B cell (primary cell): ENCODE measurements at regions of chr16 and their contacts with region 1.

Region 1: GRCh38 chr16:22297114-22297878 is at the start of gene POLR3E:
- DNase-seq: peak; percentile 100
- ATAC-seq: peak; percentile 95
- H3K4me3 ChIP-seq: peak within 1 kb of the TSS; percentile 73 to 97 (median 91)
- H3K4me3 Mint-ChIP-seq: peak within 1 kb of the TSS; percentile 91
- H3K27ac ChIP-seq: peak within 1 kb of the TSS; percentile 93 to 94
- H3K27ac Mint-ChIP-seq: peak within 1 kb of the TSS; percentile 99
- H3K4me1 ChIP-seq: peaks cover 18 to 35% of the 10 kb centered on the region in 2 donors
- H3K4me1 Mint-ChIP-seq: peaks cover 40% of the 10 kb centered on the region
- H3K27me3 ChIP-seq: no peaks in the 10 kb centered on the region
- H3K27me3 Mint-ChIP-seq: no peaks in the 10 kb centered on the region
- CTCF ChIP-seq: peak; percentile 86
- total RNA-seq, gene POLR3E: 98.4 and 101 TPM in 2 replicates

Region 2: DNA sequence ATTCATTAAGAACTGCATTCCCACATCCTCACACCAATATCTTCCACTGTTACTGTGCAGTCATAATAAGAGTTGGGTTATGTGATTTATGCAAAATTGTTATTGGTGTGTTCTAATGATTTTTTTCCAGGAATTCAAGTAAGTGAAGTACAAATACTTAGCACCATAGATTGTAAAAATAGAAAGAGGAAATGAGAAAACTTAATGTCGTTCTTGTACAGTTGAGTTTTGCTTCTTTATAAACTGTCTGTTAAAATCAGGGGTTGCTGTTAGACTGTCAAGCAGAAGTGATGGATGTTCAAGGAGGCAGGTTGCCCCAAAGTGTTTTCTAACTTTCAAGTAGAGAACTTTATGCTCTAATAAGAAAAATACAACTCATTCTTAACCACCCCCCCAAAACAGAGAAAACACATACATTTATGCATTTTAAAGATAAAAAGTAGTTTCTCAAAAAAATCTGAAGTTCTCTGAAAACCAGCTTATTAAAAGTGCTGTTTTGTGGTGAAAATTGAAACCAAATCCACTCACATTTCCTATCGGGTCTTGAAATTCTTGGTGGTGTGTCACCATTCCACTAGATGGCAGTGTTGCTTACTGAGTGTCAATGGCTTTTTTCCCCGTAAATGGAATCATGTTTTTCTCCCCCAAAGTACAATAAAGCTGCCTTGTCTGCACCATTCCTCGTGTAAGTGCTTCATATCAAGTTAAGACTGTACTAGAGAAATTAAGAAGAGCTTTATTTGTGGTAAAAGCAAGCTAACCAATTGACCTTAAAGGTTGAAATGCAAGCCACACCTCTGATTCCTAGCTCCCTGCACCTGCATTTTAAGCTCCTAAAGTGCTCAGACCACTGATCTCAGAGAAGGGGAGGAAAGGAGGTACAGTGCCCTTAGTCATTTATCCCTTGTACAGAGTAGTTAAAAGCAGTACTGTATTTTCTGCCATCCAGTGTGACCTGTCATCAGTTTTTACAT is 640.2 kb before region 1 on chr16:
- CTCF ChIA-PET with region 1: no interaction called
- POLR2A ChIA-PET with region 1: no interaction called
- intact Hi-C with region 1: loop called (anchors 5 kb)
- DNase-seq: peak; percentile 81
- ATAC-seq: peak; percentile 82
- H3K4me3 ChIP-seq: peak overlapping the region in 3 of 5 experiments; percentile 0 to 47 (median 44)
- H3K4me3 Mint-ChIP-seq: peak overlapping the region; percentile 79
- H3K27ac ChIP-seq: peak overlapping the region; percentile 51 to 78
- H3K27ac Mint-ChIP-seq: peak overlapping the region; percentile 88
- H3K4me1 ChIP-seq: peaks cover 74 to 77% of the 10 kb centered on the region in 2 donors
- H3K4me1 Mint-ChIP-seq: peaks cover 82% of the 10 kb centered on the region
- H3K27me3 ChIP-seq: no peaks in the 10 kb centered on the region
- H3K27me3 Mint-ChIP-seq: no peaks in the 10 kb centered on the region
- CTCF ChIP-seq: peak; percentile 92

Region 3: DNA sequence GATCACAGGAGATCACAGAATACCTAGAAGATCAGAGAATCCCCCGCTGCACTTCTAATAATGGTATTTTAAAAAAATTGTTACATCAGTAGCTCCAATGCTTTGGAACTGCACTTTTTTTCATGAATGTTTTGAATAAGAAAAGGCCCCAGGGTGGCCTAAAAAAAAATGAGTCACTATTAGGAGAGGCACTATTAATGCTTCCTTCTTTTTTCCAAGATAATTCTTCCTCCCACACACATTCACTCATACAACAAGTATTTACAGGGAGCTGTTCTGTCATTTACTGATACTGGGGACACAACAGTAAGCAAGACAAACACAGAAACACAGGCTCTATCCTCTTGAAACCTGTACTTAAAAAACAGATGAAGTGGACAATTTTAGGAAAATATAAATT is 295.7 kb before region 1 on chr16:
- CTCF ChIA-PET with region 1: interaction called, 15 read pairs
- POLR2A ChIA-PET with region 1: no interaction called
- intact Hi-C with region 1: loop called (anchors 1 kb)
- DNase-seq: peak; percentile 16
- ATAC-seq: no peak
- H3K4me3 ChIP-seq: no peak overlapping the region
- H3K4me3 Mint-ChIP-seq: no peak overlapping the region
- H3K27ac ChIP-seq: no peak overlapping the region
- H3K27ac Mint-ChIP-seq: no peak overlapping the region
- H3K4me1 ChIP-seq: peaks cover 4 to 9% of the 10 kb centered on the region in 2 donors
- H3K4me1 Mint-ChIP-seq: peaks cover 6% of the 10 kb centered on the region
- H3K27me3 ChIP-seq: no peaks in the 10 kb centered on the region
- H3K27me3 Mint-ChIP-seq: no peaks in the 10 kb centered on the region
- CTCF ChIP-seq: no peak

Region 4: DNA sequence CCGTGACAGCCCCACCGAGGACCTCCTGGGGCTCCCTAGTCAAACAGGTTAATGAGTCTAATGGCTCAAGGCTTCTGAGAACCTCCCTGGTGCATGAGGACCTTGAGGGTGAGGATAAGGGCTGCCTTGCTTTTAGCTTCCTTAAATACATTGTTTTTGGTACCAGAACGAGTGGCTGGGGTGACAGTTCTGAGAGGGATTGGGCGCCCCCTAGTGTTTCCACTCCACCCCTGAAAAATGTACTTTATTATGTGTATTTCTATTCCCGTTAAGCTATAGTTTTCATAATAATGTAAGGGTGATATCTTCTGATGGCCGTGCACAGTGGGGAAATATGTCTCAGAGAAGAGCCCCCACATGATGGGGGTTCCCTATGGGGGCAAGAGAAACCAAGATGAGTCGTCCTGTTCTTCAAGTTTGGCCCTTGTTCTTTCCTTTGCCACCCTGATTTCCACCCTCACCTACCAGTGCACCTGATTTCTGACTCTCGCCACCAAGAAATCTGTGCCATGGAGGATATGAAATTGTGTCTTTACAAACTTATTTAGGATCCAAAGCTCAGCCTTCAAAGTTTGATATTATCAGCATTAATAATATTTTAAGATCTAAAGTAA is 219.5 kb before region 1 on chr16:
- CTCF ChIA-PET with region 1: interaction called, 15 read pairs
- POLR2A ChIA-PET with region 1: no interaction called
- intact Hi-C with region 1: loop called (anchors 1 kb)
- DNase-seq: peak; percentile 79
- ATAC-seq: peak; percentile 60
- H3K4me3 ChIP-seq: no peak overlapping the region
- H3K4me3 Mint-ChIP-seq: no peak overlapping the region
- H3K27ac ChIP-seq: no peak overlapping the region
- H3K27ac Mint-ChIP-seq: no peak overlapping the region
- H3K4me1 ChIP-seq: no peaks in the 10 kb centered on the region
- H3K4me1 Mint-ChIP-seq: no peaks in the 10 kb centered on the region
- H3K27me3 ChIP-seq: no peaks in the 10 kb centered on the region
- H3K27me3 Mint-ChIP-seq: no peaks in the 10 kb centered on the region
- CTCF ChIP-seq: peak; percentile 96

Region 5: GRCh38 chr16:22190776-22191531 is 106.3 kb before region 1 on chr16:
- CTCF ChIA-PET with region 1: interaction called, 53 read pairs
- POLR2A ChIA-PET with region 1: interaction called, 15 read pairs
- intact Hi-C with region 1: loop called (anchors 1 kb)
- DNase-seq: peak; percentile 100
- ATAC-seq: peak; percentile 58
- H3K4me3 ChIP-seq: peak overlapping the region; percentile 53 to 78 (median 66)
- H3K4me3 Mint-ChIP-seq: peak overlapping the region; percentile 99
- H3K27ac ChIP-seq: peak overlapping the region; percentile 96 to 100
- H3K27ac Mint-ChIP-seq: peak overlapping the region; percentile 100
- H3K4me1 ChIP-seq: peaks cover 43 to 52% of the 10 kb centered on the region in 2 donors
- H3K4me1 Mint-ChIP-seq: peaks cover 59% of the 10 kb centered on the region
- H3K27me3 ChIP-seq: no peaks in the 10 kb centered on the region
- H3K27me3 Mint-ChIP-seq: peaks cover 3% of the 10 kb centered on the region
- CTCF ChIP-seq: no peak

Region 6: GRCh38 chr16:22278441-22279236 is 18.7 kb before region 1 on chr16:
- CTCF ChIA-PET with region 1: no interaction called
- POLR2A ChIA-PET with region 1: interaction called, 13 read pairs
- intact Hi-C with region 1: no loop called
- DNase-seq: no peak
- ATAC-seq: no peak
- H3K4me3 ChIP-seq: no peak overlapping the region
- H3K4me3 Mint-ChIP-seq: no peak overlapping the region
- H3K27ac ChIP-seq: no peak overlapping the region
- H3K27ac Mint-ChIP-seq: no peak overlapping the region
- H3K4me1 ChIP-seq: no peaks in the 10 kb centered on the region
- H3K4me1 Mint-ChIP-seq: no peaks in the 10 kb centered on the region
- H3K27me3 ChIP-seq: no peaks in the 10 kb centered on the region
- H3K27me3 Mint-ChIP-seq: no peaks in the 10 kb centered on the region
- CTCF ChIP-seq: no peak

Region 7: DNA sequence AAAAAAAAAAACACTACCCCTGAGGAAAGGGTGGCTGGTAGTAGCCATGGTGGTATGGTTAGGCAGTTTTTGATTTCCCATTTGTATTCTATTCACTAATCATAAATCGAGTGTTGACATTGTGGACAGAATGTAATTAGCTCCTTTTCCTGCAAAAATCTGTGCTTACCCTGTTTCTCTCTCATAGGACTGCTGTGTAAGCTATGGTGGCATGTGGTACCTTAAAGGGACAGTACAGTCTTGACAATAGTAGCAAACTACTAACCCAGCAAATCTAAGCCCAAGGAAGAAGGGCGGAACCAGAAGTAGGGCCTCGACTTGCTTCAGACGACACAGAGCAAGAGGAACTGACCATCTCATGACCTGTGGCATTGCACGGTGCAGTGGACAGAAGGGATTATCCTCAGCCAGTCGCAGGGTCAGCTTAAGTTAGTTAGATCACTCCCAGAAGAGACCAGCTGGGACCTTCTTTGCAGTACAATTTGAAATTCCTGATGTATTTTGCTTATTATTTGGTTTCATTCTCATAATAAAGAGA is 36.2 kb after region 1 on chr16:
- CTCF ChIA-PET with region 1: no interaction called
- POLR2A ChIA-PET with region 1: no interaction called
- intact Hi-C with region 1: no loop called
- DNase-seq: no peak
- ATAC-seq: no peak
- H3K4me3 ChIP-seq: no peak overlapping the region
- H3K4me3 Mint-ChIP-seq: no peak overlapping the region
- H3K27ac ChIP-seq: no peak overlapping the region
- H3K27ac Mint-ChIP-seq: no peak overlapping the region
- H3K4me1 ChIP-seq: no peaks in the 10 kb centered on the region
- H3K4me1 Mint-ChIP-seq: no peaks in the 10 kb centered on the region
- H3K27me3 ChIP-seq: no peaks in the 10 kb centered on the region
- H3K27me3 Mint-ChIP-seq: no peaks in the 10 kb centered on the region
- CTCF ChIP-seq: no peak

Region 8: GRCh38 chr16:22374311-22375116 is 77.2 kb after region 1 on chr16 and contains the start of gene CDR2:
- CTCF ChIA-PET with region 1: no interaction called
- POLR2A ChIA-PET with region 1: no interaction called
- intact Hi-C with region 1: loop called (anchors 1 kb)
- DNase-seq: peak; percentile 97
- ATAC-seq: peak; percentile 96
- H3K4me3 ChIP-seq: peak within 1 kb of the TSS; percentile 8 to 92 (median 80)
- H3K4me3 Mint-ChIP-seq: peak within 1 kb of the TSS; percentile 98
- H3K27ac ChIP-seq: peak within 1 kb of the TSS in 1 of 2 donors; percentile 54
- H3K27ac Mint-ChIP-seq: peak within 1 kb of the TSS; percentile 84
- H3K4me1 ChIP-seq: peaks cover 14 to 15% of the 10 kb centered on the region in 2 donors
- H3K4me1 Mint-ChIP-seq: peaks cover 20% of the 10 kb centered on the region
- H3K27me3 ChIP-seq: no peaks in the 10 kb centered on the region
- H3K27me3 Mint-ChIP-seq: no peaks in the 10 kb centered on the region
- CTCF ChIP-seq: no peak
- total RNA-seq, gene CDR2: 10.5 and 11.3 TPM in 2 replicates